Activated CD4-positive, alpha-beta T cell treated with anti-CD3 and anti-CD28 coated beads for 36 hours (primary cell): ENCODE measurements at regions of chr18 and their contacts with region 1.

Region 1: GRCh38 chr18:12890506-12890905 is 6.5 kb upstream of the PTPN2 start:
- DNase-seq: no peak
- ATAC-seq: no peak
- H3K4me3 Mint-ChIP-seq: no peak overlapping the region
- H3K27ac Mint-ChIP-seq: no peak overlapping the region
- H3K4me1 Mint-ChIP-seq: peaks cover 16% of the 10 kb centered on the region
- H3K27me3 Mint-ChIP-seq: peaks cover 7% of the 10 kb centered on the region

Region 2: GRCh38 chr18:12726774-12727550 is 163.5 kb before region 1 on chr18:
- CTCF ChIA-PET with region 1: interaction called, 22 read pairs
- POLR2A ChIA-PET with region 1: no interaction called
- intact Hi-C with region 1: loop called (anchors 1 kb)
- DNase-seq: peak; percentile 66
- ATAC-seq: peak; percentile 73
- H3K4me3 Mint-ChIP-seq: no peak overlapping the region
- H3K27ac Mint-ChIP-seq: no peak overlapping the region
- H3K4me1 Mint-ChIP-seq: peaks cover 3% of the 10 kb centered on the region
- H3K27me3 Mint-ChIP-seq: no peaks in the 10 kb centered on the region

Region 3: DNA sequence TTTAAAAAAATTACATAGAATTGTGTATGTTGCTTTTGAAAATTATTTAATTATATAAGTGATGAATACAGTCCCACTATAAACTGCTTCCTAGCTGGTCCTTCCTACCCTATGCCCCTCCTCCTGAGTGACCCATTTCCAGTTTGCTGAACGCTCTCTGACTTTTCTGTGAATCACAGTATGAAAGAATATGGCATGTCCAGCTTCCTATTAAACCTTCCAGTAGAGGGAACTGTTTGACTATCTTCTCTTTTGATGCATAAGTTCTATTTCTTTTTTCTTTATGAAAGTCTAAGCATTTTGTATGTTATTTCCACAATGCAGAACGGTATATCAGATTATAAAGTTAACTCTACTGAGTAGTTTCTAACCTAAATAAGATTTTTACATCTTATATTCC is 146.4 kb before region 1 on chr18:
- CTCF ChIA-PET with region 1: interaction called, 10 read pairs
- POLR2A ChIA-PET with region 1: no interaction called
- intact Hi-C with region 1: loop called (anchors 1 kb)
- DNase-seq: no peak
- ATAC-seq: peak; percentile 78
- H3K4me3 Mint-ChIP-seq: no peak overlapping the region
- H3K27ac Mint-ChIP-seq: no peak overlapping the region
- H3K4me1 Mint-ChIP-seq: peaks cover under 1% of the 10 kb centered on the region
- H3K27me3 Mint-ChIP-seq: no peaks in the 10 kb centered on the region

Region 4: GRCh38 chr18:12904012-12904516 is 13.6 kb after region 1 on chr18:
- CTCF ChIA-PET with region 1: interaction called, 10 read pairs
- POLR2A ChIA-PET with region 1: no interaction called
- intact Hi-C with region 1: no loop called
- DNase-seq: peak; percentile 70
- ATAC-seq: peak; percentile 55
- H3K4me3 Mint-ChIP-seq: peak overlapping the region; percentile 8
- H3K27ac Mint-ChIP-seq: peak overlapping the region; percentile 20
- H3K4me1 Mint-ChIP-seq: peaks cover 6% of the 10 kb centered on the region
- H3K27me3 Mint-ChIP-seq: peaks cover 5% of the 10 kb centered on the region

Region 5: DNA sequence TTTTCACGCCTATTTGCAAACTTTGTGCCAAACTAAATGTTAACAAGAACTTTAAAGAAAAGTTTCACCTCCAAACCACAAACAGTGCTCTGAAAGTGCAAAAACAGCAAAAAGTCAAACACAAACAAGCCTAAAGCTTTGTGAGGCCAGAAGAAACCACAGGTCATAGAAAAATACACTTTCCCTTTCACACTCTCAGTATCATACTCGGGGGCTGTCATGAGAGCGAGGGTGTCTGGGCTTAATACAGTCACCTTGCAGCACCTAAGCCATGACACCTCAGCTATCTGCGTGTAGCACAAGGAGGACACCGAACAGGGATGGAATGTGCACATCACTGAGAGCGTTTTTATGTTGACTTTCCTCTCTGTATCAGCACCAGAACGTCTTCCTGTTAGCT is 30.7 kb after region 1 on chr18:
- CTCF ChIA-PET with region 1: interaction called, 10 read pairs
- POLR2A ChIA-PET with region 1: no interaction called
- intact Hi-C with region 1: no loop called
- DNase-seq: peak; percentile 42
- ATAC-seq: peak; percentile 95
- H3K4me3 Mint-ChIP-seq: no peak overlapping the region
- H3K27ac Mint-ChIP-seq: no peak overlapping the region
- H3K4me1 Mint-ChIP-seq: peaks cover 8% of the 10 kb centered on the region
- H3K27me3 Mint-ChIP-seq: no peaks in the 10 kb centered on the region